Calu3 (cell line): ENCODE measurements at regions of chr5 and their contacts with region 1.

Region 1: DNA sequence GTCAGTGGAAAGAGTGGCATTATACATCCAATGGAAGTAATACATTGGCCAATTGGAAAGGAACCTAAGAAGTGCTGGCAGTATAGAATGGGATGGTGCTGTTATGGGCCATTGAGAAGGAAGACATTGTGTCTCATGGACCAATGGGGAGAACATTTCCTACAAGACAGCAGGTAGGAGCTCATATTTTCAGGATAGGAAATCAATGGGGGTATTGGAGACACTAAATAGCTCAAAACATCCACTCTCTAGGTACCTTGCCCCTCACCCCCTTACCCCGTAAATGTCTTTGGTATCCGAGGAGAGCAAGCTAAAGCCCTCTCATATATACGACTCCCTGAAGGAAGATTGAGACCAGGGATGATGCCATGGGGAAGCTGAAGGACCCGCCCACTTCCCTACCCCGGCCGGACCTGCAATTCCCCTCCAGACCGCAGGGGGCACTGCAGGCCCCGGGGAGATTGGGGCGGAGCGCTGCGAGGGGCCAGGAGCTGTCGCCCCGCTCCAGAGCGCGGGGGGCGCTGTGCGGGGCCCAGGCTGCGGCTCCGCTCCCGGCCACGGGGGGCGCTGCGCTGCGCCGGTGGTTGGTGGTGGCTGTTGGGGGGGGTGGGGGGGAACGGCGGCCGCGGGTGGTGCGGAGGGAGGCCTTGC is at the start of gene KDM3B:
- DNase-seq: peak; percentile 98
- H3K4me3 Mint-ChIP-seq: peak within 1 kb of the TSS; percentile 96
- H3K27ac Mint-ChIP-seq: peak within 1 kb of the TSS; percentile 95
- H3K4me1 Mint-ChIP-seq: peaks cover 17% of the 10 kb centered on the region
- H3K27me3 Mint-ChIP-seq: no peaks in the 10 kb centered on the region
- CTCF ChIP-seq: peak; percentile 98
- total RNA-seq, gene KDM3B: 73.5 and 75.1 TPM in 2 replicates

Region 2: DNA sequence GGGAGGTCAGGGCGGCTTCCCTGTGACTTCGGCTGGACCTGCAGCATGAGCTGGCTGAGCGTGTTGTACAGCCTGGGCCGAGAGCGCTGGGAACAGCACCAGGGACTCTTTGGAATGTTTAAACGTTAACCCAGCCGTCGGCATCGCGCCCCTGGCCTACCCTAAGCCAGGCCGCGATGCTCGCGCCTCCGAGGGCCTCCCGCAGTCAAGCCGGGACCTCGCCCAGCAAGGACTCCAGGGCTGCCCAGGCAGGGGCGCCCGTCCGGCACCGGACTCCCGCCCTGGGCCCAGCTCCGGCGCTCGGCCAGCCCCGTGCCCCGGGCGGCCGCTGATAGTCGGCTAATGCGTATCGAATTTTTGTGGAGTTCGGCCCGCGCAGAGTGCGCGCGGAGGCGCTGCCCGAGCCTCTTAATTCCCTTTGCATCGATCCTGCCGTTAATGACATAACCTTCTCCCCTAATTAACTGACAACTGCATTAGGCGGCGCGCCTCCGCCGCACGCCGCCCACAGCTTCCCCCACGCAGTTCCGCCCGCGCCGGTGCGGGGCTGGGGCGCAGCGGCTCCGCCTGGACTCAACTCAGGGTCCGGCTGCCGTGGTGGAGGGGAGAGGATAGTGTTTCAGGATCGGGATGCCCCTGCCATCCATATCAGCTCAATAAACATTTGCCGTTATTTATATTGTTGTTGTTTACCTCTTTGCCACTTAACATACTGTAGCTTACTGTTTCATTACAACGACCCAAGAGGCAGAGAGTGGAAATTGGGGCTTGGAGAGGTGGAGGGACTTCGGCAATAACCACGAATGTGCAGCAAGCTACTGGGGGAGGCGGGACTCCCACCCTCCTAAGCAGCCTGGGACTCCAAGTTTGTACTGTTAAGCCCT is 110.3 kb before region 1 on chr5:
- CTCF ChIA-PET with region 1: no interaction called
- intact Hi-C with region 1: no loop called
- DNase-seq: peak; percentile 25
- H3K4me3 Mint-ChIP-seq: peak overlapping the region; percentile 57
- H3K27ac Mint-ChIP-seq: no peak overlapping the region
- H3K4me1 Mint-ChIP-seq: no peaks in the 10 kb centered on the region
- H3K27me3 Mint-ChIP-seq: peaks cover 74% of the 10 kb centered on the region
- CTCF ChIP-seq: no peak

Region 3: DNA sequence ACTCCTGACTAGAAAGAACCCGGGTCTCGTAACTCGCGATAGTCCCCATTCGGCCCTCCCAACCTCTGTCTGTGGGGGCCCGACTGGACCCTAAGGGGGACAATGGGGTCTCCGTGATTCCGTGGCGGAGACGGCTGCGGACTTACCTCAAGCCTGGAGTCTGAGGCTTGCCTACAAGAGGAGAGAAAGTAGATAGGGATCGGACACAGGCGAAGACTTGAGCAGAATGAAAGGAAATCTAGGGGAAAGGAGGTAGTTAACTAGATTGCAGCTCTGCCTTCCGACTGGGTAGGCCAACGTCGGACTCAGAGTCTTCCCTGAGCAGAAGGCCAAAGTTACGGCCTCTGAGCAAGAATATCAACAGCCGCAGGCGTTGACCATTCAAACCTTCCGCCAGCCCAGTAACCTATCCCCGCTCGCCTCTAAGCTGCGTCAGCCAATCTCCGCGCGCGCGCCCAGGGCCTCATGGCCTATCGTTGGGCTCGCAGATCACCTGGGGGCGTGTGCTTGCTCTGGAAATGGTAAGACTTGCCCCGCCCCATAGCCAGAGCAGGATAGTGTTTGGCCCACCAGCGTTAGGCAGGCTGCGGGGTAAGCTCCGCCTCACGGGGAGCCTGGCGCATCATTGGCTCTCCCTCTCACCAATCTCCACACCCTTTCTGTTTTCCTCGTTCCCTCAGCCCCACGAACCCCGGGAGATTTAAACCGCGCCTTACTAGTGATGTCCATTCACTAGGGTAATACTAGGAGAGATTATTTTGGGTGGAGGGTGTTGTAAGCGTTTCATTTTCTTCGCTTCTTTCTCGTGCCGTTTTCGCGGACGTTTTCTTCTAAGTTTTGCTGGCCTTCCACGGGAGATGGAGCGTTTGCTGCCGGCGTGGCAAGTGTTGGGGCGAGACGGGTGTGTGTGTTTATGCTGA is 20.5 kb before region 1 on chr5 and contains the start of gene CDC25C:
- CTCF ChIA-PET with region 1: interaction called, 54 read pairs
- intact Hi-C with region 1: no loop called
- DNase-seq: peak; percentile 99
- H3K4me3 Mint-ChIP-seq: peak within 1 kb of the TSS; percentile 87
- H3K27ac Mint-ChIP-seq: peak within 1 kb of the TSS; percentile 89
- H3K4me1 Mint-ChIP-seq: peaks cover 8% of the 10 kb centered on the region
- H3K27me3 Mint-ChIP-seq: no peaks in the 10 kb centered on the region
- CTCF ChIP-seq: no peak
- total RNA-seq, gene CDC25C: 14.9 and 15.4 TPM in 2 replicates

Region 4: DNA sequence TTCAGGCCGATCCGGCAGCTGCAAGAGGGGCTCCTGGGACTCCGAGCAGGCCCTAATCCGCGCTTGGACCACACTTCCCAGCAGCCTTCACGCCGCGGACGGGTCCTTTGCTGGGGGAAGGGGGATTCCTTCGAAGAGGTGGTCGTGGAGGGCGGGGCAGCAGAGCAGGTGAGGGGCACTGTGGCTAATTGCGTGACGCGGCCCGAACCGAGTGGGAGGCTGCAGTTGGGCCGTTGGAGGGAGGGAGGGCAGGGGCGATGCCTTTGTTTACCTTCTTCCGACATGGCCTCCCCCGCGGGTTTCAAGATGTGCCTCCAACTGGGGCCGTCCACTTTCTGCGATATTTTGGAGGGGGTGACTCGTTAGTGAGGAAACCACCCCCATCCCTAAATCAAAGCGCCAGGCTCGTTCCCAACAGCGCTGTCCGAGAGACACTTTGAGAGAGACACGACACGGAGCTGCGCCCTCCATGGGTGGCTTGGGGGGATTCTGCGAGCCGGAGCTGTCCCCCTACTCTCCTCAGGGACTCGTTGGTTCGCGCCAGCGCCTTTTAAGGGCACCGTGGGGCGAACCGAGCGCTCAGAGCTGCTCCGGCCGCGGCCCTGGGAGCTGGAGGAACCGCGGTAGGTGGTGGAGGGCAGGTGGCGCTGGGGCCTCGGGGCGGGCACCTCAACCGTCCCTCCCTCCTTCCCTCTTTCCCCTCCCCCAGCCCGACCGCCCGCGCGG is 14.3 kb before region 1 on chr5 and contains the start of gene FAM53C:
- CTCF ChIA-PET with region 1: interaction called, 54 read pairs
- intact Hi-C with region 1: no loop called
- DNase-seq: peak; percentile 97
- H3K4me3 Mint-ChIP-seq: peak within 1 kb of the TSS; percentile 87
- H3K27ac Mint-ChIP-seq: peak within 1 kb of the TSS; percentile 99
- H3K4me1 Mint-ChIP-seq: peaks cover 10% of the 10 kb centered on the region
- H3K27me3 Mint-ChIP-seq: no peaks in the 10 kb centered on the region
- CTCF ChIP-seq: no peak
- total RNA-seq, gene FAM53C: 36.1 and 38.5 TPM in 2 replicates

Region 5: GRCh38 chr5:138369706-138370105 is 17.5 kb after region 1 on chr5:
- CTCF ChIA-PET with region 1: interaction called, 11 read pairs
- intact Hi-C with region 1: no loop called
- DNase-seq: no peak
- H3K4me3 Mint-ChIP-seq: no peak overlapping the region
- H3K27ac Mint-ChIP-seq: no peak overlapping the region
- H3K4me1 Mint-ChIP-seq: no peaks in the 10 kb centered on the region
- H3K27me3 Mint-ChIP-seq: no peaks in the 10 kb centered on the region
- CTCF ChIP-seq: no peak